ENCODE measurements at regions of chr1 and their contacts with region 1.

Region 1: GRCh38 chr1:95043141-95043980 is 29.4 kb downstream of the ALG14 start:
- DNase-seq: peak; percentile 87
- ATAC-seq: peak; percentile 95
- H3K4me3 Mint-ChIP-seq: no peak overlapping the region
- H3K27ac Mint-ChIP-seq: no peak overlapping the region
- H3K4me1 Mint-ChIP-seq: no peaks in the 10 kb centered on the region
- H3K27me3 Mint-ChIP-seq: no peaks in the 10 kb centered on the region
- CTCF ChIP-seq: peak; percentile 97

Region 2: GRCh38 chr1:94832446-94832845 is 210.9 kb before region 1 on chr1:
- CTCF ChIA-PET with region 1: interaction called, 13 read pairs
- POLR2A ChIA-PET with region 1: no interaction called
- DNase-seq: no peak
- ATAC-seq: no peak
- H3K4me3 Mint-ChIP-seq: no peak overlapping the region
- H3K27ac Mint-ChIP-seq: no peak overlapping the region
- H3K4me1 Mint-ChIP-seq: peaks cover 4% of the 10 kb centered on the region; the same call in 1 of the 2 replicates
- H3K27me3 Mint-ChIP-seq: no peaks in the 10 kb centered on the region
- CTCF ChIP-seq: no peak

Region 3: DNA sequence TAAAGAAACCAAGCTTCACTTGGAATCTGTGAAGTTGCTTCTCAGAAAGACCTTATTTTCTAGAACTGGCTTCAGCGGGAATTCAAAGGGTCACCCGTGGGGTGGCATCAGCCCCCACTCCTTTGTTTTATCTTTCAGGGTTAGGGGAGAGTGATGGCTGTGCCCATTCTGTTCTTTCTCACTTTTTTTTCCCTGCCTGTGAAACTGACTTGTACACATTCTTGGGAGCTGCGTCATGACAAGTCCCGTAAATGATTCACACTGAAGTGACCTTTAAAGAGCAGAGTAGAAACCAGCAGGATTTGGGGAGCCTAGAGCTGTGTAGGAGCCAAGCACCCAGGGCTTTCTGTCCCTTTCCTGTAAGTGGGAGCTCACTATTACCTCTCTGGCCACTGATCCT is 179.4 kb before region 1 on chr1:
- CTCF ChIA-PET with region 1: interaction called, 18 read pairs
- POLR2A ChIA-PET with region 1: interaction called, 3 read pairs
- DNase-seq: no peak
- ATAC-seq: no peak
- H3K4me3 Mint-ChIP-seq: no peak overlapping the region
- H3K27ac Mint-ChIP-seq: 0 out of 2 replicates have a peak overlapping the region, but pooled peaks have one; percentile 15
- H3K4me1 Mint-ChIP-seq: peaks cover 59% of the 10 kb centered on the region
- H3K27me3 Mint-ChIP-seq: no peaks in the 10 kb centered on the region
- CTCF ChIP-seq: no peak

Region 4: DNA sequence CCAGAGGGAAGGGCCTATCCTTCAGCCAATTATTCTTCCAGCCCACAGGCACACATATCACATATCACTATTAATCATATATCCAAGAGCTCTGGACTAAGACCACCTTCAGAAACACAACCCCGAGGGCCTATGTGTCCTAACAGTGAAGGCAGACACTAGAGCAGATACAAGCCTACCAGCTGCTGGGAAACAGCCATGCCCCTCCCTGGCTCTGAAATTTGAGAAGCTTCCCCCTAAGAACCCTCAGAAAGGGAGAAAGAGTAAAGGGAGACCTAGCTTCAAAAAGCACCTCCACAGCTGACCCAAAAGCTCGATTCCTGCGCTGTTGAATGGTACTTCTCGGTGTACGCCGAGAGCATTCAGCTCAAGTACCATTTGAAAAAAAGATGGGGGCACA is 133.9 kb before region 1 on chr1:
- CTCF ChIA-PET with region 1: interaction called, 10 read pairs
- POLR2A ChIA-PET with region 1: no interaction called
- DNase-seq: peak; percentile 33
- ATAC-seq: peak; percentile 81
- H3K4me3 Mint-ChIP-seq: peak overlapping the region; percentile 31; the same call in 1 of the 2 replicates
- H3K27ac Mint-ChIP-seq: peak overlapping the region; percentile 86
- H3K4me1 Mint-ChIP-seq: peaks cover 70% of the 10 kb centered on the region
- H3K27me3 Mint-ChIP-seq: no peaks in the 10 kb centered on the region
- CTCF ChIP-seq: no peak

Region 5: GRCh38 chr1:94926915-94927404 is 116.4 kb before region 1 on chr1 and contains the start of gene CNN3:
- CTCF ChIA-PET with region 1: interaction called, 11 read pairs
- POLR2A ChIA-PET with region 1: interaction called, 3 read pairs
- DNase-seq: peak; percentile 94
- ATAC-seq: peak; percentile 84
- H3K4me3 Mint-ChIP-seq: peak within 1 kb of the TSS; percentile 98
- H3K27ac Mint-ChIP-seq: peak within 1 kb of the TSS; percentile 100
- H3K4me1 Mint-ChIP-seq: peaks cover 68% of the 10 kb centered on the region
- H3K27me3 Mint-ChIP-seq: no peaks in the 10 kb centered on the region
- CTCF ChIP-seq: no peak
- total RNA-seq, gene CNN3: 183 to 187 TPM (median 185 TPM) in 3 replicates

Region 6: DNA sequence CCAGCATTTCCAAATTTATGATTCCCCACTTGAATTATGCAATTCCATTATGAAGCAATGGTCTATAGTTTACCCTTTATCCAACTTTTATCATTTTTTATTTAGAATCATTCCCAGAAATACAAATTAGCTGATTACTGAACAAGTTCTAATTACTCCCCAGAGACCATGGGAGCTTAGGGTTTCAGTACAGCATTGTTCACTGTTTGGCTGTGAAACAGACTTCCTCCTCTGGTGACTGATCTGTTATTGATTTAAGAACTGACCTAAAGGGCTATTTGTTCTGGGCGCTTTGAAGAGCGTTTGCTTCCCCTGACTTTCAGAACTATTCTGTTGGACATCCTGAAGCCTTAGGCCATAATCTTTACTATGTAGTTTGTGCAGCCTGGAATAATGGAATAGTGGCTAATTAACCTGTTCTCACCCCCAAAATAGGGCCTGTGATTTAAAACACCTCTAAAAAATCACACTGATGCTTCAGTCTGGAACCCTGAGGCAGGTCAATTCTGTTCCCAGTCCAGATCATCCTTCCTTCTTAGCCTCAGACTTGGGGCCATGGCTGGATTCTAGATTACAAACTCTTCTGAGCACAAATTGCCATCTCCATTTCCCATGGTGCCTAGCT is 29.3 kb before region 1 on chr1:
- CTCF ChIA-PET with region 1: interaction called, 15 read pairs
- POLR2A ChIA-PET with region 1: no interaction called
- DNase-seq: no peak
- ATAC-seq: no peak
- H3K4me3 Mint-ChIP-seq: no peak overlapping the region
- H3K27ac Mint-ChIP-seq: no peak overlapping the region
- H3K4me1 Mint-ChIP-seq: peaks cover 2% of the 10 kb centered on the region; the same call in 1 of the 2 replicates
- H3K27me3 Mint-ChIP-seq: no peaks in the 10 kb centered on the region
- CTCF ChIP-seq: no peak